WTC11 (cell line): ENCODE measurements at regions of chr9 and their contacts with region 1.

Region 1: GRCh38 chr9:88781628-88782391 is 209.5 kb upstream of the S1PR3 start:
- DNase-seq: peak; percentile 31
- ATAC-seq: peak; percentile 75
- H3K4me3 Mint-ChIP-seq: no peak overlapping the region
- H3K27ac Mint-ChIP-seq: no peak overlapping the region
- H3K4me1 Mint-ChIP-seq: peaks cover 15% of the 10 kb centered on the region
- H3K27me3 Mint-ChIP-seq: no peaks in the 10 kb centered on the region
- CTCF ChIP-seq: no peak

Region 2: GRCh38 chr9:88287972-88288371 is 493.8 kb before region 1 on chr9:
- CTCF ChIA-PET with region 1: no interaction called
- POLR2A ChIA-PET with region 1: interaction called, 13 read pairs
- DNase-seq: no peak
- ATAC-seq: 0 out of 2 replicates have a peak, but pooled peaks have one; percentile 28
- H3K4me3 Mint-ChIP-seq: no peak overlapping the region
- H3K27ac Mint-ChIP-seq: no peak overlapping the region
- H3K4me1 Mint-ChIP-seq: no peaks in the 10 kb centered on the region
- H3K27me3 Mint-ChIP-seq: no peaks in the 10 kb centered on the region; the same call in 1 of the 2 replicates
- CTCF ChIP-seq: no peak

Region 3: DNA sequence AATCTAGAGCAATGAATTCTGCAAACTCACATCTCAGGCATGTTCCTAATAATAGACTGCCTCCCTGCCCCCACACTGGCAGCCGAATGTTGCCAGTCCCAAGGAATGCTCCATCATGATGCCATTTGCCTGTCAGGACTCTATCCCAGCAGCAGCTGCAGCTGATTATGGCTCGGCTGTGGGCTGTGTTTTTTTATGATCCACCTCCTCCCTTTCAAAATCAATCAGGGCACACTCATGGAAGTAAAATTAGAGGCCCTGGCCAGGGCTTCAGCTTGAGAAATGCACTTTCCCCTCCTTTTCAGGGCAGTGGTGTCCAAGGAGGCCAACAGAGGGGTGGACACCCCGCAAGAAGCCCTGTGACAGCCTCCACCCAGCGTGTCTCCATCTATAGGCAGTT is 32.8 kb after region 1 on chr9:
- CTCF ChIA-PET with region 1: no interaction called
- POLR2A ChIA-PET with region 1: no interaction called
- DNase-seq: no peak
- ATAC-seq: no peak
- H3K4me3 Mint-ChIP-seq: no peak overlapping the region
- H3K27ac Mint-ChIP-seq: no peak overlapping the region
- H3K4me1 Mint-ChIP-seq: peaks cover 33% of the 10 kb centered on the region
- H3K27me3 Mint-ChIP-seq: no peaks in the 10 kb centered on the region
- CTCF ChIP-seq: no peak